ENCODE measurements at regions of chr4 and their contacts with region 1.

Region 1: DNA sequence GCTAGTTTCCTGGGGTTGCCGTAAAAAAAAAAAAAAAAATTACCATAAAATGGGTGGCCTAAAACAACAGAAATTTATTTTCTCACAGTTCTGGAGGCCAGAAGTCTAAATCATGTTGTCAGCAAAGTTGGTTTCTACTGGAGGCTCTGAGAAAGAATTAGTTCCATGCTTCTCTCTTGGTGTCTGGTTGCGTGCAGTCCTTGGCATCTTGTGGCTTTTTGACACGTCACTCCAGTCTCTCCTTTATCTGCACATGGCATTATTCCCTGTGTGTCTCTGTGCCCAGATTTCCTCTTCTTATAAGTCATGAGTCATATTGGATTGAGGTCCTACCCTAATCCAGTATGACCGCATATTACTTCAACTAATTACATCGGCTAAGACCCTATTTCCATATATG is 38.7 kb downstream of the SPATA4 start:
- DNase-seq: peak in 1 of 2 donors; percentile 56
- ATAC-seq: peak; percentile 97 to 99 (median 98)
- H3K4me3 ChIP-seq: no peak overlapping the region
- H3K27ac ChIP-seq: peak overlapping the region; percentile 65
- H3K4me1 ChIP-seq: peaks cover 8% of the 10 kb centered on the region
- H3K27me3 ChIP-seq: no peaks in the 10 kb centered on the region
- CTCF ChIP-seq: no peak

Region 2: GRCh38 chr4:176034499-176034898 is 122.2 kb before region 1 on chr4:
- intact Hi-C with region 1: no loop called
- DNase-seq: no peak
- ATAC-seq: peak in 1 of 4 donors; percentile 54
- H3K4me3 ChIP-seq: no peak overlapping the region
- H3K27ac ChIP-seq: no peak overlapping the region
- H3K4me1 ChIP-seq: no peaks in the 10 kb centered on the region
- H3K27me3 ChIP-seq: no peaks in the 10 kb centered on the region
- CTCF ChIP-seq: peak; percentile 46

Region 3: GRCh38 chr4:176107695-176108094 is 49.0 kb before region 1 on chr4:
- intact Hi-C with region 1: no loop called
- DNase-seq: no peak
- ATAC-seq: no peak
- H3K4me3 ChIP-seq: no peak overlapping the region
- H3K27ac ChIP-seq: no peak overlapping the region
- H3K4me1 ChIP-seq: no peaks in the 10 kb centered on the region
- H3K27me3 ChIP-seq: peaks cover 0 to 2% (median 0%) of the 10 kb centered on the region in 3 donors
- CTCF ChIP-seq: no peak

Region 4: DNA sequence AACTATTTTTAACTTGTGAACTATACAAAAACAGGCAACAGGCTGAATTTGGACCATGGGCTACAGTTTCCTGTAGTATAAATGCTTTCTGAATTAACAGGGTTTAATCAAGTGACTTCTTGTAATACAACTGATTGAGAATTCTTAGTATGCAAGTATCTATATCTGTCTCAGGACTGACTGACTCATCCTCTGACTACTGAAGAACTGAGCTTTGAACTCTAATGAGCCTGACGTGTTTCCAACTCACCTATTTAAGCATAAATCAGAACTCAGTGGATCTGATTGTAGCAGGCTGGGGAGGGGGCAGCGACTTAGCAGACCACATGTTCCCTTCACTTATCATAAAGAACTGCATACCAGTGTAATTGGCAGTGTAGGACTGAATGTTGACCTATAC is 31.0 kb after region 1 on chr4:
- intact Hi-C with region 1: loop called (anchors 2 to 5 kb)
- DNase-seq: no peak
- ATAC-seq: peak; percentile 64 to 80 (median 78)
- H3K4me3 ChIP-seq: peak overlapping the region; percentile 1
- H3K27ac ChIP-seq: peak overlapping the region; percentile 90
- H3K4me1 ChIP-seq: peaks cover 49% of the 10 kb centered on the region
- H3K27me3 ChIP-seq: no peaks in the 10 kb centered on the region
- CTCF ChIP-seq: no peak

Region 5: GRCh38 chr4:176277162-176277904 is 120.7 kb after region 1 on chr4:
- intact Hi-C with region 1: loop called (anchors 1 to 5 kb)
- DNase-seq: peak; percentile 40 to 78
- ATAC-seq: peak; percentile 75 to 85 (median 80)
- H3K4me3 ChIP-seq: peak overlapping the region; percentile 64
- H3K27ac ChIP-seq: peak overlapping the region; percentile 94
- H3K4me1 ChIP-seq: peaks cover 33% of the 10 kb centered on the region
- H3K27me3 ChIP-seq: no peaks in the 10 kb centered on the region
- CTCF ChIP-seq: peak; percentile 62

Measured in psoas muscle (tissue), 8 donors.